ENCODE measurements at regions of chr7 and their contacts with region 1.

Region 1: DNA sequence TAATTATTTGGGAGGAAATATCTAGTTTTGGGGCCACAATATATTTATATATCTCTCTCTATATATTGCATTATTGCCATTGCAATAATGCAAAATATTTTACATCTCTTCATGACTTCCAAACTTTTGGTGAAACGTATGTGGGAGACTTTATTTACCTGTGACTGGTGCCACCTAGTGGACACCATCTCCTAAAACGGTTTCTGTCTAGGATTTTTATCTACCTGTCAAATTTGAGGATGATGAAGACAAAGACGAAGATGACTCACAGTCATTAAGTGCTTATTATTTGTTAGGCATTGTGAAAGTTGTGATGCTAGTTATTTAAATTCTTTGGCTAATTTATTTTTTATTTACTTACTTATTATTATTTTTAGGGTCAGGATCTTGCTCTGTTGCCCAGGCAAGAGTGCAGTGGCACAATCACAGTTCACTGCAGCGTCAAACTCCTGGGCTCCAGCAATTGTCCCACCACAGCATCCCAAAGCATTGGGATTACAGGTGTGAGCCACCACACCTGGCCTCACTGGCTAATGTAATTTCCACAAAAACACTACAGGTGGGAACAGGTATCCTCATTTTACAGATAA is 18.7 kb upstream of the CBLL1 start:
- DNase-seq: peak; percentile 77
- H3K4me3 ChIP-seq: no peak overlapping the region
- H3K27ac ChIP-seq: no peak overlapping the region
- H3K4me1 ChIP-seq: no peaks in the 10 kb centered on the region
- H3K27me3 ChIP-seq: peaks cover 12 to 17% of the 10 kb centered on the region in 2 experiments
- CTCF ChIP-seq: peak; percentile 41 to 47
- POLR2A ChIP-seq: no peak

Region 2: GRCh38 chr7:107201795-107202450 is 523.3 kb before region 1 on chr7:
- CTCF ChIA-PET with region 1: interaction called, 3 read pairs
- POLR2A ChIA-PET with region 1: no interaction called
- dilution Hi-C with region 1: no loop called
- intact Hi-C with region 1: loop called (anchors 5 kb)
- DNase-seq: peak; percentile 42
- H3K4me3 ChIP-seq: no peak overlapping the region
- H3K27ac ChIP-seq: no peak overlapping the region
- H3K4me1 ChIP-seq: no peaks in the 10 kb centered on the region
- H3K27me3 ChIP-seq: no peaks in the 10 kb centered on the region
- CTCF ChIP-seq: peak; percentile 42 to 45
- POLR2A ChIP-seq: no peak

Region 3: DNA sequence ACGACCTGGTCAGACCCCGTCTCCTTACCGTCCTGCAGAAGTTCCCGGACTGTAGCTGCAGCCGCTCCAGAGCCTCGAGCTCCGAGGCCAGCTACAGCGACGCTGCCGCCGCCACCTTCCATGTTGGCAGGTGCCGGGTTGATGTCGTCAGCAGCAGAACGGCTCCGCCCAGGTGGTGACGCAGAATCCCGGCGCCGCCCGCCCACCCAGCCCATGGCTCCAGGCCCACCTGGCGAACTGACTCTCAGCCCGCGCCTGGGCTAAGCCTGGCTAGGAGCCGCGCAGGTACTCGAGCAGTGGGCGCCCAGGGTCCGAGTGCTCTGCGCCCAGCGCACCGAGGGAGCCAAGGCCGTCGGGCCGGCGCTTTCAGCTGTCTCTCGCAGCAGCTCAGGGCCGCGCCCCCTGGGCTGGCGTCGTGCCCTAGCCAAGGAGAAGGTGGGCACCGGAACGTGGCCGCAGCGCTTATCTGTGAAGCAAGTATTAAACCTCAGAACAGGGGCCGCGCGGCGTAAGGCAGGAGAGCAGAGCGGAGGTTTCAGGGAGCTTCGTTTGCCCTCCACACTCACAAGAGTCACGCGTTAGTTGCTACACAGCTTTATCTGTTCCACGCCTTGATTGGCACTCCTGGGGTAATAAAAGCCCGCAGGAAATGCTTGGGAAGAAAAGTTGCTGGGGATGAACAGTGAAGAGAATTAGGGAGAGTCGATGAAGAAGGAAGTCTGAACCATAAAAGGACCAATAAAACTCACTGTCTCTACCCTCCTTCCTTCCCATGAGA is 161.3 kb before region 1 on chr7 and contains the starts of genes COG5 and DUS4L:
- CTCF ChIA-PET with region 1: interaction called, 3 read pairs
- POLR2A ChIA-PET with region 1: no interaction called
- dilution Hi-C with region 1: no loop called
- intact Hi-C with region 1: loop called (anchors 10 kb)
- DNase-seq: peak; percentile 89
- H3K4me3 ChIP-seq: peak within 1 kb of the TSS; percentile 87 to 99 (median 95)
- H3K27ac ChIP-seq: peak within 1 kb of the TSS; percentile 91
- H3K4me1 ChIP-seq: peaks cover 33% of the 10 kb centered on the region
- H3K27me3 ChIP-seq: no peaks in the 10 kb centered on the region
- CTCF ChIP-seq: no peak
- POLR2A ChIP-seq: peak; percentile 88
- total RNA-seq, gene COG5: 42.4 and 45.3 TPM in 2 replicates
- total RNA-seq, gene DUS4L: 9.6 and 9.8 TPM in 2 replicates

Region 4: GRCh38 chr7:107594961-107595737 is 130.1 kb before region 1 on chr7:
- CTCF ChIA-PET with region 1: interaction called, 5 read pairs
- POLR2A ChIA-PET with region 1: no interaction called
- dilution Hi-C with region 1: no loop called
- intact Hi-C with region 1: loop called (anchors 1 kb)
- DNase-seq: peak; percentile 98
- H3K4me3 ChIP-seq: peak overlapping the region in 1 of 3 experiments; percentile 7
- H3K27ac ChIP-seq: peak overlapping the region; percentile 97
- H3K4me1 ChIP-seq: peaks cover 57% of the 10 kb centered on the region
- H3K27me3 ChIP-seq: no peaks in the 10 kb centered on the region
- CTCF ChIP-seq: no peak
- POLR2A ChIP-seq: no peak

Region 5: DNA sequence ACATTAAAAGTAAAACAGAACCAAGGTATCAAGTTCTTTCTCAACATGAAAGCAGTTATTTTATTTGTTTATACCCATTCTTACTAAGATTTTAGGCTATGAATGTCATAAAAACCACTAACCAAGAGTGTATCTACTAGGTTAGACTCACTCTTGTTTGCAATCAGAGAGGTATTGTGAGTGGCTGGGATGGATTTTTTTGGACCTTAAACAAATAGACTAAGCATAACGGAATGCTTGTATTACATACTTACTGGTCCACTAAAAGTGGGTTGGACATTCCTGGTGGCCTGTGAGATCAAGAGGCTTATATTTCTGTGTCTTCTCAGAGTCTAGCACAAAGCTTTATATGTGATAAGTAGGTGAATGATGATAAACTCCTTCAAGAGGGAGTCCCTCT is 13.9 kb before region 1 on chr7:
- CTCF ChIA-PET with region 1: interaction called, 11 read pairs
- POLR2A ChIA-PET with region 1: no interaction called
- dilution Hi-C with region 1: no loop called
- intact Hi-C with region 1: no loop called
- DNase-seq: no peak
- H3K4me3 ChIP-seq: no peak overlapping the region
- H3K27ac ChIP-seq: no peak overlapping the region
- H3K4me1 ChIP-seq: no peaks in the 10 kb centered on the region
- H3K27me3 ChIP-seq: no peaks in the 10 kb centered on the region
- CTCF ChIP-seq: no peak
- POLR2A ChIP-seq: no peak